H1 (cell line): ENCODE measurements at regions of chr12 and their contacts with region 1.

Region 1: GRCh38 chr12:95582230-95583058 is 31.2 kb upstream of the USP44 start:
- DNase-seq: no peak
- H3K4me3 ChIP-seq: no peak overlapping the region
- H3K27ac ChIP-seq: no peak overlapping the region
- H3K4me1 ChIP-seq: no peaks in the 10 kb centered on the region
- H3K27me3 ChIP-seq: no peaks in the 10 kb centered on the region
- CTCF ChIP-seq: peak in 2 of 3 experiments; percentile 29 to 37; a peak in 2 of 4 replicates
- EP300 ChIP-seq: no peak
- POLR2A ChIP-seq: no peak
- RAD21 ChIP-seq: peak; percentile 75 to 78

Region 2: GRCh38 chr12:95533985-95534384 is 48.5 kb before region 1 on chr12:
- CTCF ChIA-PET with region 1: interaction called, 14 read pairs
- POLR2A ChIA-PET with region 1: interaction called, 3 read pairs
- DNase-seq: no peak
- H3K4me3 ChIP-seq: no peak overlapping the region
- H3K27ac ChIP-seq: no peak overlapping the region; the same call in 1 of the 2 replicates
- H3K4me1 ChIP-seq: peaks cover 0 to 19% (median 14%) of the 10 kb centered on the region in 4 experiments; a peak in 4 of 7 replicates
- H3K27me3 ChIP-seq: no peaks in the 10 kb centered on the region
- CTCF ChIP-seq: no peak
- EP300 ChIP-seq: no peak
- POLR2A ChIP-seq: no peak
- RAD21 ChIP-seq: no peak

Region 3: DNA sequence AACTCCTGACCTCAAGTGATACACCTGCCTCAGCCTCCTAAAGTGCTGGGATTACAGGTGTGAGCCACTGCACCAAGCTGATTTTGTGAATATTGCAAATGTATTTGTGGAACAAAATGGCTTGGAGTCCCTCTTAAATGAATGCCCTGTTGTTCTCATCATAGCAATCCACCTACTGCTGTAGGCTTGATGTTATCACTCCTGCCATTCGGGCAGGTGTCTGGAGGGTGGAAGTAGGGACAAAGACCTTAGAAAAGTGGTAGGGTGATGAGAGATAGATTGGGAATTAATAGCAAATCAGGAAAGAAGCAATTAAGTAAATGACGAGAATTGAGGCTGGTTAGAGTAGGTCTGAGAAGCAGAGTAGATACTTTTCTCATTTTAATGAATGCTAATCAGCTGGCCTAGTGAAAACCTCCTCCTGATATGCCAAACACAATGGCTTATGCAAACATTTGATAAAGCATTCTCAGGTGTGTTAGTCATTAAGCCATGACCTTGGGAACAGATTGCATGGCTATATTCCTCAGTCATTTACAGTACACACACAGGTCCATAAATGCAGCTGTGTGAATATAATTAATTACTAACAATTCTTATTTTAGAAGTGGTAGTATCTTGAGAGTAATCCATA is 29.3 kb after region 1 on chr12:
- CTCF ChIA-PET with region 1: interaction called, 14 read pairs
- POLR2A ChIA-PET with region 1: interaction called, 3 read pairs
- DNase-seq: no peak
- H3K4me3 ChIP-seq: peak overlapping the region in 1 of 4 experiments; percentile 31; a peak in 1 of 8 replicates
- H3K27ac ChIP-seq: peak overlapping the region; percentile 39; the same call in 1 of the 2 replicates
- H3K4me1 ChIP-seq: peaks cover 1 to 15% (median 10%) of the 10 kb centered on the region in 4 experiments
- H3K27me3 ChIP-seq: no peaks in the 10 kb centered on the region
- CTCF ChIP-seq: no peak
- EP300 ChIP-seq: no peak
- POLR2A ChIP-seq: no peak
- RAD21 ChIP-seq: no peak

Region 4: GRCh38 chr12:95646781-95647190 is 64.3 kb after region 1 on chr12:
- CTCF ChIA-PET with region 1: interaction called, 10 read pairs
- POLR2A ChIA-PET with region 1: no interaction called
- DNase-seq: no peak
- H3K4me3 ChIP-seq: no peak overlapping the region
- H3K27ac ChIP-seq: no peak overlapping the region
- H3K4me1 ChIP-seq: no peaks in the 10 kb centered on the region
- H3K27me3 ChIP-seq: no peaks in the 10 kb centered on the region
- CTCF ChIP-seq: no peak
- EP300 ChIP-seq: no peak
- POLR2A ChIP-seq: no peak
- RAD21 ChIP-seq: no peak

Region 5: DNA sequence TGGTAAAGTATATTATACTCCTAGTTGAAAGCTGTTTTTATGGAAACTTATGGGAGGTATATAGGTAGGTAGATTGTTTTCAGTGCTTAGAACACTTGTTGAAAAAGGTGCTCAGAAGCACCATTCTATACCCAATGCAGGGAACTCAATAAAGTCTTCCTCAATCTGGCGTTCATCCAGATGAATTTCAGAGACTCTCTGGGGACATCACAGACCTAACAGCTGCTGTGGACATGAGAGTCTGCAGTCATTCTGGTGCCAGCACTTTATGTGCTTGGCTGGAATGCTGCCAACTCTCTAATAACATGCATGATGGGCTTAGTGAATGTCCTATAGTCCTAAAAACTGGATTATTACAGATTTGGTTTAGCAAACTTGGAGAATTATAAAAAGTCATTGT is 92.2 kb after region 1 on chr12:
- CTCF ChIA-PET with region 1: no interaction called
- POLR2A ChIA-PET with region 1: no interaction called
- DNase-seq: no peak
- H3K4me3 ChIP-seq: no peak overlapping the region
- H3K27ac ChIP-seq: no peak overlapping the region
- H3K4me1 ChIP-seq: no peaks in the 10 kb centered on the region
- H3K27me3 ChIP-seq: no peaks in the 10 kb centered on the region
- CTCF ChIP-seq: no peak
- EP300 ChIP-seq: no peak
- POLR2A ChIP-seq: no peak
- RAD21 ChIP-seq: no peak

Region 6: GRCh38 chr12:95815635-95816212 is 233.3 kb after region 1 on chr12:
- CTCF ChIA-PET with region 1: interaction called, 65 read pairs
- POLR2A ChIA-PET with region 1: no interaction called
- DNase-seq: no peak
- H3K4me3 ChIP-seq: no peak overlapping the region
- H3K27ac ChIP-seq: no peak overlapping the region
- H3K4me1 ChIP-seq: no peaks in the 10 kb centered on the region
- H3K27me3 ChIP-seq: no peaks in the 10 kb centered on the region
- CTCF ChIP-seq: peak in 2 of 3 experiments; percentile 43 to 67; a peak in 2 of 4 replicates
- EP300 ChIP-seq: no peak
- POLR2A ChIP-seq: no peak
- RAD21 ChIP-seq: peak; percentile 79